ENCODE measurements at regions of chr5 and their contacts with region 1.

Region 1: GRCh38 chr5:57779383-57780223 is 297.0 kb upstream of the ACTBL2 start:
- DNase-seq: no peak
- ATAC-seq: peak; percentile 84 to 87
- H3K4me3 ChIP-seq: no peak overlapping the region
- H3K27ac ChIP-seq: no peak overlapping the region
- H3K4me1 ChIP-seq: no peaks in the 10 kb centered on the region
- H3K27me3 ChIP-seq: no peaks in the 10 kb centered on the region

Region 2: DNA sequence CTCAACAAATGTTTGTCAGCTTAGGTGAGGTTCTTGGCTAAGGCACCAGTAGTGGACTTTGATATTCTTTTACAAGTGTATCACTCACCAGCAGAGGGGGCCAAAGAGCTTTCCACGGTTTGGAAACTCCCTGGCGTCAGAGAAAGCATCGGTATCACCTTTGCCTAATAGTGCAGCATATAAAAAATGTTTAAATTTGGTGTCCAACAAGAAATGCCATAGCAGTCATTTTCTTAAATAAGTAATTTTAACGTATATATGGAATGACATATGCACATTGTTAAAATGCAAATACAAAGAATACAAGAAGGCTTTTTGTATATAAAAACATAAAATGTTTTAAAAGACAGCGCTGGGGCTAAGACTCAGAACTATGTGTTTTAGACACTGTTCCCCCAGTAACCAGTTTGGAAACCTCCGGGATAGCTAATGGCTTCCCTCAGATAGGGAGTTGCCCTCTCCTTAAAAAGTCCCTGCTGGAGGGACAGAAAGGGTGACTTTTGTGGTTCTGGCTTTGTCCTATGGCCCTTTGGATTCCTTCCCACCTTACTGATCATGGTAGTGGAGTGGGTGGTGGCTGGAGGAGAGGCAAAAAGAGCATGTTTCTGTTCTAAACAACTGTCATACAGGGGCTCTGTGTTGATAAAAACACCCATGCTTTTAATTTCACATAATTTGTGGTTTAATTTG is 481.2 kb before region 1 on chr5:
- intact Hi-C with region 1: loop called in 1 of 4 experiments (anchors 10 kb)
- DNase-seq: peak; percentile 75 to 79 (median 78)
- ATAC-seq: peak; percentile 83 to 90
- H3K4me3 ChIP-seq: no peak overlapping the region
- H3K27ac ChIP-seq: no peak overlapping the region
- H3K4me1 ChIP-seq: no peaks in the 10 kb centered on the region
- H3K27me3 ChIP-seq: no peaks in the 10 kb centered on the region

Region 3: DNA sequence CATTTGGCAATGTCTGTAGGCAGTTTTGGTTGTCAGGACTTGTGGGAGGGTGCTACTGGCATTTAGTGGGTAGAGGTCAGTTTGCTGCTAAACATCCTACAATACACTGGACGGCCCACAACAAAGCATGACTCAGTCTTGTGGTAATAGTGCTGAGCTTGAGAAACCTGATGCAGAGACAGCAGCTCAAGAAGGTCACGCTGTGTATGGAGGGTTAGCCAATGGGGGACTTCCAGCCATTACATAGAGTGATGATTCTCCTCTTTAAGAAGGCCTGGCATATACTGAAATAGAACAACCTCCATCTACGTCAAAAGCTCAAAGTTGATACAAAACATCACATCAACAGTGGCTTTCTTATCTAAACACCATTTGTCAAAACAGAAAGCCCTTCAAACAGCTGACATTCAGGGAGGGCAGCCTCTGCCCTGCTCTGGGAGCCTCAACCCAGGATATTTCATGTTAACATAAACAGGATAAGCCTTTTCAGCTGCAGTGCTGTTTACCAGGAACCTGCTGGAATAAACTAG is 462.7 kb before region 1 on chr5:
- intact Hi-C with region 1: loop called in 1 of 4 experiments (anchors 10 kb)
- DNase-seq: no peak
- ATAC-seq: peak in 1 of 2 donors; percentile 71
- H3K4me3 ChIP-seq: no peak overlapping the region
- H3K27ac ChIP-seq: no peak overlapping the region
- H3K4me1 ChIP-seq: no peaks in the 10 kb centered on the region
- H3K27me3 ChIP-seq: no peaks in the 10 kb centered on the region

Region 4: GRCh38 chr5:57468481-57469163 is 311.0 kb before region 1 on chr5:
- intact Hi-C with region 1: no loop called
- DNase-seq: no peak
- ATAC-seq: no peak
- H3K4me3 ChIP-seq: no peak overlapping the region
- H3K27ac ChIP-seq: no peak overlapping the region
- H3K4me1 ChIP-seq: no peaks in the 10 kb centered on the region
- H3K27me3 ChIP-seq: no peaks in the 10 kb centered on the region

Region 5: GRCh38 chr5:57499262-57500050 is 280.1 kb before region 1 on chr5:
- intact Hi-C with region 1: loop called in 3 of 4 experiments (anchors 10 kb)
- DNase-seq: peak in 2 of 3 donors; percentile 33 to 51
- ATAC-seq: peak; percentile 37 to 52
- H3K4me3 ChIP-seq: peak overlapping the region; percentile 42
- H3K27ac ChIP-seq: no peak overlapping the region
- H3K4me1 ChIP-seq: peaks cover 4% of the 10 kb centered on the region
- H3K27me3 ChIP-seq: no peaks in the 10 kb centered on the region

Region 6: GRCh38 chr5:57878301-57878722 is 98.7 kb after region 1 on chr5:
- intact Hi-C with region 1: loop called in 2 of 4 experiments (anchors 10 kb)
- DNase-seq: no peak
- ATAC-seq: no peak
- H3K4me3 ChIP-seq: no peak overlapping the region
- H3K27ac ChIP-seq: no peak overlapping the region
- H3K4me1 ChIP-seq: no peaks in the 10 kb centered on the region
- H3K27me3 ChIP-seq: no peaks in the 10 kb centered on the region

Region 7: DNA sequence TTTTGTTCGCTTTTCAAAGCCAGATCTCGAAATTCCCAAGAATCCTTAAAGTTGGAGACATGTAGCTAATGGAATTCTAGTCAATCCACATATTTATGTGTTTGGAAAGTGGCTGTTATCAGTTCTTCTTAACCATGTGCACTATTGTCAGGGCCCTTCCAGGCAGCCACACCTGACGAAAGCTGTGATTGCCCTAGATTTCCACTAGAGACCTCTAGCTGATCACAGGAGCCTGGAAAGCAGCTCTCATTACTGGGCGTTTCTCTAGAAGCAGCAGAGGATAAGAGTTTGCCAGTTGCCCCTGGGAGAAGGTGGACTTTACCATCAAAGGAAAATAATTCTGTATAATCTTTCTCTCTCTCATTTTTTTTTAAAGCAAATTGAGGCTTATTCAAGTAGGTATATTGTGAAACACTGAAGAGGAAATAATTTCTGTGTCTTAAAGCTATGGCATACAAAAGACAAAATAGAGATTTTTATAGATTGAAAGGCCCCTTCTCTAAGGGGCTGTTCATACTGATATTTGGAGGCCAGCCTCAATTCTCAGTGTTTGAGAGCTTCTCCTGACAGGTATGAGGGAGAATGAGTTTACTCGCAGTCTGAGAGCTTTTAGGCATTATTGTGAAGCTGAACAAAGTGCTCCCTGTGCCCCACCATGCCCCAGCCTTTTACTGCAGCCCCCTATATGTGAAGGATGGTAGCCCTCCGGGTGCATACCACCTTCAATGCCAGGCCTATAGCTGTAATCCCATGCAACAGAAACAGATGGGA is 108.4 kb after region 1 on chr5:
- intact Hi-C with region 1: loop called in 1 of 4 experiments (anchors 10 kb)
- DNase-seq: peak in 2 of 3 donors; percentile 24 to 33
- ATAC-seq: peak; percentile 91 to 96
- H3K4me3 ChIP-seq: no peak overlapping the region
- H3K27ac ChIP-seq: no peak overlapping the region
- H3K4me1 ChIP-seq: no peaks in the 10 kb centered on the region
- H3K27me3 ChIP-seq: no peaks in the 10 kb centered on the region

Region 8: GRCh38 chr5:58460732-58461286 is 681.2 kb after region 1 on chr5:
- intact Hi-C with region 1: loop called (anchors 2 to 5 kb)
- DNase-seq: peak; percentile 92 to 96 (median 95)
- ATAC-seq: peak; percentile 89 to 90
- H3K4me3 ChIP-seq: peak overlapping the region; percentile 91
- H3K27ac ChIP-seq: peak overlapping the region; percentile 89
- H3K4me1 ChIP-seq: no peaks in the 10 kb centered on the region
- H3K27me3 ChIP-seq: no peaks in the 10 kb centered on the region